ENCODE measurements at regions of chr1 and their contacts with region 1.

Region 1: GRCh38 chr1:88877382-88877825 is 14.0 kb downstream of the GTF2B start:
- DNase-seq: no peak
- H3K4me3 ChIP-seq: no peak overlapping the region
- H3K27ac ChIP-seq: no peak overlapping the region
- H3K4me1 ChIP-seq: peaks cover 61% of the 10 kb centered on the region
- H3K27me3 ChIP-seq: no peaks in the 10 kb centered on the region
- CTCF ChIP-seq: peak; percentile 73

Region 2: GRCh38 chr1:88655685-88656299 is 221.6 kb before region 1 on chr1:
- intact Hi-C with region 1: loop called (anchors 5 kb)
- DNase-seq: no peak
- H3K4me3 ChIP-seq: no peak overlapping the region
- H3K27ac ChIP-seq: no peak overlapping the region
- H3K4me1 ChIP-seq: no peaks in the 10 kb centered on the region
- H3K27me3 ChIP-seq: no peaks in the 10 kb centered on the region
- CTCF ChIP-seq: peak; percentile 77